CD8-positive, alpha-beta memory T cell (primary cell): ENCODE measurements at regions of chr14 and their contacts with region 1.

Region 1: DNA sequence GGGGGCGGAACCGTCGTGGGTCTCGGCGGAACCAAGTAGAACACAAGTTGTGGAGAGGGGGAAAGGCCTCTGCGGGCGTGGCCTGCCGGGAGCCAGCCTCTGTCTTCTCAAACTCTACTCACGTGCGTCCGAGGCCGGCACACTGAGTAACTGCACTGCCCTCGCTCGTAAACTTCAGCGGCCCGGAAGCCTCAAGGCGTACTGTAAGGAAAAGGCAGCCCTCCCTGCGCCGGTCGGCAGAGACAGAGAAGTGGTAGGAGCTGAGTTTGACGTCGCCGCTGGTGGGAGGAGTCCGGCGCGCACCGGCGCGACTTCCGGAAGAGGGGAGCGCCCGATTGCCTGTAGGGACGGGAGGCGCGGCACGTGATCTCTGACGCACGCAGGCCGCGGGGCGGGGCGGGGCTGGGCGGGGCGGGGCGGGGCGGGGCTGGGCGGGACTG is at the start of gene FBXO33:
- DNase-seq: peak; percentile 94 to 98 (median 98)
- H3K4me3 ChIP-seq: peak within 1 kb of the TSS; percentile 97
- H3K4me3 Mint-ChIP-seq: peak within 1 kb of the TSS; percentile 92 to 100 (median 100)
- H3K27ac ChIP-seq: peak within 1 kb of the TSS; percentile 100
- H3K27ac Mint-ChIP-seq: peak within 1 kb of the TSS; percentile 96 to 100 (median 100)
- H3K4me1 ChIP-seq: peaks cover 42% of the 10 kb centered on the region
- H3K4me1 Mint-ChIP-seq: peaks cover 33 to 50% (median 50%) of the 10 kb centered on the region in 3 donors
- H3K27me3 ChIP-seq: no peaks in the 10 kb centered on the region
- H3K27me3 Mint-ChIP-seq: no peaks in the 10 kb centered on the region
- total RNA-seq, gene FBXO33: 19.4 to 20.1 TPM

Region 2: GRCh38 chr14:39102969-39103957 is 328.9 kb before region 1 on chr14 and contains the start of gene SEC23A:
- CTCF ChIA-PET with region 1: interaction called, 3 read pairs
- POLR2A ChIA-PET with region 1: interaction called, 18 read pairs
- DNase-seq: peak; percentile 77 to 91 (median 83)
- H3K4me3 ChIP-seq: peak within 1 kb of the TSS; percentile 96
- H3K4me3 Mint-ChIP-seq: peak within 1 kb of the TSS; percentile 91 to 98 (median 95)
- H3K27ac ChIP-seq: peak within 1 kb of the TSS; percentile 95
- H3K27ac Mint-ChIP-seq: peak within 1 kb of the TSS; percentile 92 to 100 (median 97)
- H3K4me1 ChIP-seq: peaks cover 31% of the 10 kb centered on the region
- H3K4me1 Mint-ChIP-seq: peaks cover 30 to 59% (median 55%) of the 10 kb centered on the region in 3 donors
- H3K27me3 ChIP-seq: no peaks in the 10 kb centered on the region
- H3K27me3 Mint-ChIP-seq: no peaks in the 10 kb centered on the region
- total RNA-seq, gene SEC23A: 37.4 to 37.9 TPM

Region 3: GRCh38 chr14:39114073-39114838 is 317.9 kb before region 1 on chr14 and contains the start of gene GEMIN2:
- CTCF ChIA-PET with region 1: interaction called, 7 read pairs
- POLR2A ChIA-PET with region 1: interaction called, 17 read pairs
- DNase-seq: peak; percentile 88 to 97 (median 91)
- H3K4me3 ChIP-seq: peak within 1 kb of the TSS; percentile 85
- H3K4me3 Mint-ChIP-seq: peak within 1 kb of the TSS; percentile 95 to 99 (median 97)
- H3K27ac ChIP-seq: peak within 1 kb of the TSS; percentile 73
- H3K27ac Mint-ChIP-seq: peak within 1 kb of the TSS; percentile 91 to 98 (median 96)
- H3K4me1 ChIP-seq: peaks cover 14% of the 10 kb centered on the region
- H3K4me1 Mint-ChIP-seq: peaks cover 18 to 34% (median 32%) of the 10 kb centered on the region in 3 donors
- H3K27me3 ChIP-seq: no peaks in the 10 kb centered on the region
- H3K27me3 Mint-ChIP-seq: peaks cover 0 to 2% of the 10 kb centered on the region in 2 donors
- total RNA-seq, gene GEMIN2: 17.0 to 18.1 TPM

Region 4: GRCh38 chr14:39169541-39169900 is 262.7 kb before region 1 on chr14:
- CTCF ChIA-PET with region 1: interaction called, 5 read pairs
- POLR2A ChIA-PET with region 1: interaction called, 32 read pairs
- DNase-seq: no peak
- H3K4me3 ChIP-seq: peak overlapping the region; percentile 88
- H3K4me3 Mint-ChIP-seq: peak overlapping the region; percentile 89 to 100 (median 99)
- H3K27ac ChIP-seq: peak overlapping the region; percentile 98
- H3K27ac Mint-ChIP-seq: peak overlapping the region; percentile 89 to 100 (median 98)
- H3K4me1 ChIP-seq: peaks cover 41% of the 10 kb centered on the region
- H3K4me1 Mint-ChIP-seq: peaks cover 47 to 66% (median 63%) of the 10 kb centered on the region in 3 donors
- H3K27me3 ChIP-seq: no peaks in the 10 kb centered on the region
- H3K27me3 Mint-ChIP-seq: no peaks in the 10 kb centered on the region

Region 5: DNA sequence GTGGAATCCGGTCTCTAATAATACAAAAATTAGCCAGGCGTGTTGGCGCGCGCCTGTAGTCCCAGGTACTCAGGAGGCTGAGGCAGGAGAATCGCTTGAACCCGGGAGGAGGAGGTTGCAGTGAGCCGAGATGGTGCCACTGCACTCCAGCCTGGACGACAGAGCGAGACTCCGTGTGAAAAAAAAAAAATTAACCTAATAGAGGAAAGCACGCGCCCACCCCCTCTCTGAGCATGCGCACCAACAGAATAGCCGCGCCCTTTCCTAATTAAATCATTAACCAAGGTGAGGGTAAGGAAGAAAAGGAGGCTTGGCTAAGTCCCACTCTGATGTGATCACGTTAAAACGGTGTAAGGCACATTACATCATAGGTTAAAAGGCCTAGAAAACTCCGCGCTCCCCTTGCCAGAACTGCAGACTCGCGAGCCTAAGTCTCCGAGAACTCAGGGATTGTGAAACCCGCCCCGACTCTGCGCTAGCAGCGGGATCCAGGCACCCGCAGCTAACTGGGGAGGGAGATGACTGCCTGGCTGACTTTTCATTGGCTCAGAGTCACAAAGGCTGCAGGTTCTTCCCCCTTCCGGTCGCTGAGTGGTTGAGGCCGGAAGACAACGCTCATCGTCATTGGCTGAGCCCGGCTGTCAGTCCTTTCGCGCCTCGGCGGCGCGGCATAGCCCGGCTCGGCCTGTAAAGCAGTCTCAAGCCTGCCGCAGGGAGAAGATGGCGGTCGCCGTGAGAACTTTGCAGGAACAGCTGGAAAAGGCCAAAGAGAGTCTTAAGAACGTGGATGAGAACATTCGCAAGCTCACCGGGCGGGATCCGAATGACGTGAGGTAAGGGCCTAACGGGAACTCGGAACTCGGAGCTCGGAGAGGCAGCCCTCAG is 257.4 kb before region 1 on chr14 and contains the start of gene PNN:
- CTCF ChIA-PET with region 1: interaction called, 5 read pairs
- POLR2A ChIA-PET with region 1: interaction called, 32 read pairs
- DNase-seq: peak; percentile 92 to 99 (median 98)
- H3K4me3 ChIP-seq: peak within 1 kb of the TSS; percentile 91
- H3K4me3 Mint-ChIP-seq: peak within 1 kb of the TSS; percentile 97 to 100 (median 99)
- H3K27ac ChIP-seq: peak within 1 kb of the TSS; percentile 96
- H3K27ac Mint-ChIP-seq: peak within 1 kb of the TSS; percentile 97 to 100 (median 99)
- H3K4me1 ChIP-seq: peaks cover 36% of the 10 kb centered on the region
- H3K4me1 Mint-ChIP-seq: peaks cover 45 to 58% (median 57%) of the 10 kb centered on the region in 3 donors
- H3K27me3 ChIP-seq: no peaks in the 10 kb centered on the region
- H3K27me3 Mint-ChIP-seq: peaks cover 0 to 3% of the 10 kb centered on the region in 2 donors
- total RNA-seq, gene PNN: 92.5 to 94.0 TPM

Region 6: DNA sequence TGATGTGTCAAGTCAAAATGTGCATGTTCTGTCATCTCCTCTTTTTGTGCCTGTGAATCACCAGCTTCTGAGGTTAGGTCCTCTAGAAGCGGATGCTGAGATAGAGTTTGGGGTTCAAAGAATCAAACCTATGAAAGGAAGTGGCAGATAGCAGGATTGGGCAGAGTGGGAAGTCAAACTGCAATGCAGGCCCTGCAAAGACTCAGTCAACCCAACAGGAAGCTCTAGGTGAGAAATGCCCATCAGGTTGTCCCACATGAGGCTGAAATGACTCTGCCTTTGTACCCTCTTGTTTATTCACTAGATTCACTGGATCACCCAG is 203.0 kb before region 1 on chr14:
- CTCF ChIA-PET with region 1: interaction called, 8 read pairs
- POLR2A ChIA-PET with region 1: interaction called, 18 read pairs
- DNase-seq: peak in 4 of 5 donors; percentile 38 to 77 (median 56)
- H3K4me3 ChIP-seq: no peak overlapping the region
- H3K4me3 Mint-ChIP-seq: peak overlapping the region; percentile 8 to 65 (median 38)
- H3K27ac ChIP-seq: peak overlapping the region; percentile 35
- H3K27ac Mint-ChIP-seq: peak overlapping the region; percentile 77 to 98 (median 92)
- H3K4me1 ChIP-seq: peaks cover 23% of the 10 kb centered on the region
- H3K4me1 Mint-ChIP-seq: peaks cover 44 to 52% (median 50%) of the 10 kb centered on the region in 3 donors
- H3K27me3 ChIP-seq: no peaks in the 10 kb centered on the region
- H3K27me3 Mint-ChIP-seq: no peaks in the 10 kb centered on the region

Region 7: GRCh38 chr14:39266871-39267591 is 165.2 kb before region 1 on chr14:
- CTCF ChIA-PET with region 1: interaction called, 9 read pairs
- POLR2A ChIA-PET with region 1: interaction called, 55 read pairs
- DNase-seq: peak; percentile 62 to 83 (median 76)
- H3K4me3 ChIP-seq: peak overlapping the region; percentile 92
- H3K4me3 Mint-ChIP-seq: peak overlapping the region; percentile 84 to 97 (median 95)
- H3K27ac ChIP-seq: peak overlapping the region; percentile 91
- H3K27ac Mint-ChIP-seq: peak overlapping the region; percentile 82 to 99 (median 98)
- H3K4me1 ChIP-seq: peaks cover 33% of the 10 kb centered on the region
- H3K4me1 Mint-ChIP-seq: peaks cover 51 to 60% (median 59%) of the 10 kb centered on the region in 3 donors
- H3K27me3 ChIP-seq: no peaks in the 10 kb centered on the region
- H3K27me3 Mint-ChIP-seq: no peaks in the 10 kb centered on the region